ENCODE measurements at regions of chr5 and their contacts with region 1.

Region 1: DNA sequence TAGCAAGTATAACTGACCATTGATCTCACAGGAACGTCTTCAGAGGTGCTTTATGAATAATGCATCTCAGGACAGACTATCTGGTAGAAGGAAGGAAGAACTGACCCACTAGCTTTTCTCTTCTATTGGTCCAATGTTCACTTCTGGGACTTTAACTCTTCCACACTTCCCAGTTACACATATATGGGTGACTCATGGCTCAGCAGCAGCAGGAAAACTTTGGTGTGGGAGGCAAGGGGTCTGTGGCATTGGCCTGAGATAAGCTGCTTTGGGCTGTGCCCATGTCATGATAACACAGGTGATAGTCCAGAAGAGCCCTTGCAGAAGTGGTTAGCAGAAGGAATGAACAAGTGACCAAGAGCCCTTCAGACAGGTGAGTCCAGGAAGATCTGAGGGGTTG is 148.8 kb downstream of the RAB3C start:
- DNase-seq: no peak
- ATAC-seq: no peak
- H3K4me3 ChIP-seq: no peak overlapping the region
- H3K27ac ChIP-seq: no peak overlapping the region
- H3K4me1 ChIP-seq: no peaks in the 10 kb centered on the region
- H3K27me3 ChIP-seq: no peaks in the 10 kb centered on the region
- CTCF ChIP-seq: no peak
- POLR2A ChIP-seq: no peak
- RAD21 ChIP-seq: no peak

Region 2: DNA sequence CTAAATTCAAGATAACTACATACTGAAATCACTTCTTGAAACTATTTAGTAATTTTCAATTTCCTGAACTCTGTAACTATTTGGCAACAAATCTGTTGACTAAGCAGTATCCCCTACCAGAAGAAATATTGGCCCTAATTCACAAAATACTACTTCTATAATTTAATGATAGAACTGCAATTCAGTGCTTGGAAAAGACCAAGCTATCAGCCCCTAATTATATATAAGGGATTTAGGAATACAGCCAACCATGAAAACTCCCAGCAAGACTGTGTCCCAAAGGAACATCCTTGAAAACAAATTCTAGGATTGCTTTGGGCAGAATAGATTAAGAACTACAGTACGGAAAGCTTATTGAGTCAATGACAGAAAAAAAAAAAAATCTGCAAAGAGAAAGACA is 20.5 kb after region 1 on chr5:
- CTCF ChIA-PET with region 1: interaction called, 6 read pairs
- POLR2A ChIA-PET with region 1: no interaction called
- dilution Hi-C with region 1: no loop called
- in situ Hi-C with region 1: no loop called
- intact Hi-C with region 1: loop called (anchors 1 kb)
- DNase-seq: no peak
- ATAC-seq: no peak
- H3K4me3 ChIP-seq: no peak overlapping the region
- H3K27ac ChIP-seq: no peak overlapping the region
- H3K4me1 ChIP-seq: no peaks in the 10 kb centered on the region
- H3K27me3 ChIP-seq: no peaks in the 10 kb centered on the region
- CTCF ChIP-seq: no peak
- POLR2A ChIP-seq: no peak
- RAD21 ChIP-seq: no peak

Measured in IMR-90 (cell line).